ENCODE measurements at regions of chr2 and their contacts with region 1.

Region 1: DNA sequence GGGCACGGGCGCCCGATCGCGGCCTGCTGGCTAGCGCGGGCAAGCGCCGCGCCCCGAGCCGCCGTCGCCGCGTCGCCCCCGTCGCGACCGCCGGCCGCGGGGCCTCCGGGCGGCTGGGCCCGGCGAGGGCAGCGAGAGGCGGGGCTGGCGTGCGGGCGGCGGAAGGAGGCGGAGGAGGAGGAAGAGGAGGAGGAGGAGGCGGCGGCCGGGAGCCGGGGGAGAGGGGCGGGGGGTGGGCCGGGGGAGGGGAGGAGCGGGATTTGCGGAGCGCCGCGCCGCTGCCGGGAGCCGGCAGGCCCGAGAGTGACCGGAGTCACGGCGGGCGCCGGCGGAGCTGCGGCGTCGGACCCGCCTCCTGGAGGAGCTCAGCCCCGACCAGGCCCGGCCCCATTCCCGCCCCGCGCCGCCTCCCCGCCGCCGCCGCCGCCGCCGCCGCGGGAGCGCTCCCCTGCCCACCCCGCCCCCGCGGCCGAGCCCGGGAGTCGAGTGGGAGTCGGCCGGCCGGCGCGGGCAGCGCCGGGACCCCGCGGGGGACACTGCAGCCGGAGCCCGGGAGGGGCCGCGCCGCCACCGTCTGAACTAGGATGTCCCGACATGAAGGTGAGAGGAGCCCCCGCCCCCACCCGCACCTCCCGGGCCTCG is at the start of gene KCMF1:
- DNase-seq: no peak
- ATAC-seq: peak; percentile 56
- H3K4me3 ChIP-seq: peak within 1 kb of the TSS; percentile 85 to 97 (median 92)
- H3K4me3 Mint-ChIP-seq: peak within 1 kb of the TSS; percentile 98
- H3K27ac ChIP-seq: peak within 1 kb of the TSS; percentile 74 to 96
- H3K27ac Mint-ChIP-seq: peak within 1 kb of the TSS; percentile 97
- H3K4me1 ChIP-seq: peaks cover 42 to 48% of the 10 kb centered on the region in 2 donors
- H3K4me1 Mint-ChIP-seq: peaks cover 56% of the 10 kb centered on the region
- H3K27me3 ChIP-seq: no peaks in the 10 kb centered on the region
- H3K27me3 Mint-ChIP-seq: no peaks in the 10 kb centered on the region
- CTCF ChIP-seq: no peak
- total RNA-seq, gene KCMF1: 73.1 and 81.5 TPM in 2 replicates

Region 2: GRCh38 chr2:84832772-84833461 is 138.1 kb before region 1 on chr2:
- CTCF ChIA-PET with region 1: no interaction called
- POLR2A ChIA-PET with region 1: no interaction called
- intact Hi-C with region 1: no loop called
- DNase-seq: peak; percentile 68
- ATAC-seq: peak; percentile 82
- H3K4me3 ChIP-seq: peak overlapping the region in 3 of 5 experiments; percentile 31 to 55 (median 34)
- H3K4me3 Mint-ChIP-seq: peak overlapping the region; percentile 78
- H3K27ac ChIP-seq: peak overlapping the region; percentile 66 to 71
- H3K27ac Mint-ChIP-seq: peak overlapping the region; percentile 91
- H3K4me1 ChIP-seq: peaks cover 18 to 26% of the 10 kb centered on the region in 2 donors
- H3K4me1 Mint-ChIP-seq: peaks cover 22% of the 10 kb centered on the region
- H3K27me3 ChIP-seq: no peaks in the 10 kb centered on the region
- H3K27me3 Mint-ChIP-seq: no peaks in the 10 kb centered on the region
- CTCF ChIP-seq: no peak

Region 3: DNA sequence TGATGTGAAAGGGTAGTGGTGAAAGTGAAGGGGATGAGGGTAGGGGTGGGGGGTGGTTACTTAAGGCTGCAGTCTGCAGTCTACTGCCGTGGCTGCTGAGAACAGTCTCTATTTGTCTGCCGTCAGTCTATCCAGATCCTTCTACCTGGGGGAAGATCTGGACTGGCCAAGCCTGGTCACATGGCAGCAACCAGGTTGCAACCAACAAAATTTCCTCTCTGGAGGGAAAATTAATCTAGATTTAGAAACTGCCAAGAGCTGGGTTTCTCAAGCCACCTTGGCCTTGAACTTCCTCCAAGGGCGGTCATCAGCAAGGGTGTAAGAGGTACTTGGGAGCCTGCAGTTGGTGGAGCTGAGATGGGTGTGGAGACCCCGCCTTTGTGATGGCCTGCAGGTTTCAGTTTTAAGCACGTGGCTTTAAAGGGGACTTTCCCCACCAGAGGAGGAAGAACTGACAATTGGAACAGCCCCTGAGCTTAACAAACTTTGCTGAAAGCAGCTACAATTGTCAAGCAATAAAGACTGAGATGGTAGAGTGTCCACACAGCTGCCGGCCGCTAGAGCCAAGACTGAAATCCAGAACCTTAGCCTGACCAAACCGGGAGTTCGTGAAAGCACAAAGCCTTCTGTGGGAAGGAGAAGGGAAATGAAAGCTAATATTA is 31.4 kb before region 1 on chr2:
- CTCF ChIA-PET with region 1: interaction called, 17 read pairs
- POLR2A ChIA-PET with region 1: interaction called, 39 read pairs
- intact Hi-C with region 1: loop called (anchors 2 kb)
- DNase-seq: peak; percentile 93
- ATAC-seq: peak; percentile 96
- H3K4me3 ChIP-seq: peak overlapping the region in 4 of 5 experiments; percentile 15 to 55 (median 38)
- H3K4me3 Mint-ChIP-seq: peak overlapping the region; percentile 76
- H3K27ac ChIP-seq: peak overlapping the region; percentile 88 to 90
- H3K27ac Mint-ChIP-seq: peak overlapping the region; percentile 90
- H3K4me1 ChIP-seq: peaks cover 53 to 65% of the 10 kb centered on the region in 2 donors
- H3K4me1 Mint-ChIP-seq: peaks cover 50% of the 10 kb centered on the region
- H3K27me3 ChIP-seq: no peaks in the 10 kb centered on the region
- H3K27me3 Mint-ChIP-seq: no peaks in the 10 kb centered on the region
- CTCF ChIP-seq: no peak